ENCODE measurements at regions of chr1 and their contacts with region 1.

Region 1: DNA sequence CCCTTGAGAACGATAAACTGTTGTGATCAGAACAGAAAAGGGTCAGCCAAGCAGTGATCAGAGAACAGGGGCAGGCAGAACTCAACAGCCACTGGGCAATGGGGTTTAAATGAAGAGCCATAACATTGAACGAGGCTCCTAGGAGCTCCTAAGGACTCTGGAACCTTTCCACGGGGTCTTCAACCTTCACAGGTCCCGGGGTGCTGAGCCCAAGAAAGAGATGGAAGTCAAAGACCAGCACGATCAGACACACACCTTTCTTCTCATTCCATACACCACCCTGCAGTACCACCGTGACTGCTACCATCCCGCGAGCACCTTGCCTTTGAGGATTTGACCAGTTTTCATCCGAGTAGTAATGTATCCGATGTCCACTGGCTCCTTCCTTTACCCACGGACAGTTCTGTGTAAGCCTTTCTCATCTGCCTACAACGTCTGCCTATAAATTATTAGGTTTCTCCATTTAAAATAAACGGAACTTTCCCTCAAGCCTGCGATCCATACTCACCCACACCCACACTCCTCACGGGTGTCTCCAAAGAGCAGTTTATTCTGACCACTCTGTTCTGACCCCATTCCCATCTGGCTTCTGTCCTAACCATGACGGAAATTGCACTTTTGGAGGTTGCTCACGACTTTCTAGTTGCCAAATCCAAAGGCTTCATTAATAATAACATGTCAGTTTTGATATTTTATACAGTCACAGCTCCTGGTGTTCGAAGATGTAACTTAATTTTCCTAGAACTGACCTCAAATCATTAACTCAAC is 16.8 kb upstream of the HHAT start:
- H3K4me3 ChIP-seq: peak overlapping the region; percentile 42; the same call in 1 of the 2 replicates
- H3K27ac ChIP-seq: no peak overlapping the region; the same call in 1 of the 2 replicates
- H3K4me1 ChIP-seq: no peaks in the 10 kb centered on the region
- CTCF ChIP-seq: no peak

Region 2: DNA sequence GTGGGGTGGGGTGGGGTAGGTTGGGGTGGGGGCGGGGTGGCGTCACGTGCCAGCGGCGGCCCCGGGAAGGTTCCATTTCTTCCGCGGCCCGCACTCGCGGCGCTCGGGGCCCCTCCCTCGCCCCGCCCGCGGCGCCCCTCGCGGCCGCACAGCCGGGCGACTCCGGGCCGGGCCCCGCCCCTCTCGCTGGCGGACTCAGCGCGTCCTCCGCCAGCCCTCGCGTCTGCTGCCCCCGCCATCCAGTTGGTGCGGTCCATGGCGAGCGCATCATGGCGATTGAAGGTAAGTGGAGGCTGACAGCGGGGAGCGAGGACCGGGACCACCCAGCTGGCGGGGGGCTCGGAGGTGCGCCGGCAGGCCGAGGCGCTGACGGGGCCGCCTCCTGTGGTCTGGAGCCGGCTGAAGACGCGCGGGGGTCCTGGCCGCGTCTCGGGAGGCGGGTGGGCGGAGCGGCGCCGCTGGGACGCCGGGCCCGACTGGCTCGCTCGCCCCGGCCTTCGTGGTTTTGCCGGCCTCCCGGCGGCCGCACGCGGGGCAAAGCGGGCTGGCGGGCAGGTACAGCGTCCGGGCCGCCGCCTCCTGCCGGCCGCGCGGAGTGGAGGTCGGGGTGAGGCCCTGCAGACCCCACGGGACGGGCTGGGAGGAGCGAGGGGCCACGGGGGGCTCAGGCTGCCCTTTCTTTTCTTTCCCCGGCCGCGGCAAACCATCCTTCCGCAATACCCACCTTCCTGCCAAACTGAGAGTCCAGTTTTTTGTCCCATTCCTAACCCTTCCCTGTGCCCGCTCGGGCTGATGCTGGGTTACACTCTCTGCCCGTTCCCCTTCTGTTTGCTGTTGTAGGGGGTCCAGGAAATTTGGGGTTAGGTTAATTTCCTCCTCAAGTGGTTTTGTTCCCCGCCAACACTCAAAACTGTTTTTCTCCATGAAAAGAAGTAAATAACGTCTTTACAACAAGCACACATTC is 373.6 kb before region 1 on chr1 and contains the start of gene SYT14:
- CTCF ChIA-PET with region 1: no interaction called
- POLR2A ChIA-PET with region 1: interaction called, 16 read pairs
- H3K4me3 ChIP-seq: peak within 1 kb of the TSS; percentile 79
- H3K27ac ChIP-seq: peak within 1 kb of the TSS; percentile 75; the same call in 1 of the 2 replicates
- H3K4me1 ChIP-seq: peaks cover 7% of the 10 kb centered on the region; the same call in 1 of the 2 replicates
- CTCF ChIP-seq: no peak

Region 3: DNA sequence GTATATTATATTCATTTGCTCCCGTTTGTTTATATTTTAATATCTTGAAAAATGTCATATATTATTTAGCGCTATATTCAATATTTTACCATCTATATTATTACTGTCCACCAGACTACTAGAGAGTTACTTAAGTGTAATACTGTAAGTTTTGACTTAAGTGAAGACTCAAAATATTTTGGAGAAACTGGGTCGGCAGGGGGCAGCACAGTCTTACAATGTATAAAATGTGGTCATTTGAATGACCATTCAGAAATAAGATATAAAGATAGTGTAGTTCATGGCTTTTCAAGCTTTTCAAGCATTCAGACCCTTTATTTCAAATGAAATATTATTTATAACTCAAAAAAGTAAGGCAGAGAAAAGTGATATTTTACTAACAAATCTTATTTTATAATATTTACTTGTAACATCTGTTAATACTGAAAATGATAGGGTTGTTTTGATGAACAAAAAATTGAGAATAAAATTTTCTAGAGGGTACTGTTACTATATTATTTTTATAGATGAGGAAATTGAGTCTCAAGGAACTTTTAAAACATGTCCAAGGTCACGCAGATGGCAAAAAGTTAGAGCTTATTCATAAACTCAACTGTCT is 168.3 kb before region 1 on chr1:
- CTCF ChIA-PET with region 1: interaction called, 71 read pairs
- POLR2A ChIA-PET with region 1: interaction called, 4 read pairs
- H3K4me3 ChIP-seq: no peak overlapping the region
- H3K27ac ChIP-seq: no peak overlapping the region
- H3K4me1 ChIP-seq: no peaks in the 10 kb centered on the region
- CTCF ChIP-seq: no peak

Region 4: GRCh38 chr1:210222340-210223006 is 89.4 kb before region 1 on chr1:
- CTCF ChIA-PET with region 1: interaction called, 13 read pairs
- POLR2A ChIA-PET with region 1: no interaction called
- H3K4me3 ChIP-seq: no peak overlapping the region
- H3K27ac ChIP-seq: 0 out of 2 replicates have a peak overlapping the region, but pooled peaks have one; percentile 5
- H3K4me1 ChIP-seq: 0 out of 2 replicates have a peak, but pooled peaks cover 5% of the 10 kb centered on the region
- CTCF ChIP-seq: no peak

Region 5: GRCh38 chr1:210292231-210292871 is 19.6 kb before region 1 on chr1:
- CTCF ChIA-PET with region 1: interaction called, 11 read pairs
- POLR2A ChIA-PET with region 1: interaction called, 3 read pairs
- H3K4me3 ChIP-seq: peak overlapping the region; percentile 33
- H3K27ac ChIP-seq: peak overlapping the region; percentile 78; the same call in 1 of the 2 replicates
- H3K4me1 ChIP-seq: peaks cover 20% of the 10 kb centered on the region
- CTCF ChIP-seq: peak; percentile 83

Region 6: DNA sequence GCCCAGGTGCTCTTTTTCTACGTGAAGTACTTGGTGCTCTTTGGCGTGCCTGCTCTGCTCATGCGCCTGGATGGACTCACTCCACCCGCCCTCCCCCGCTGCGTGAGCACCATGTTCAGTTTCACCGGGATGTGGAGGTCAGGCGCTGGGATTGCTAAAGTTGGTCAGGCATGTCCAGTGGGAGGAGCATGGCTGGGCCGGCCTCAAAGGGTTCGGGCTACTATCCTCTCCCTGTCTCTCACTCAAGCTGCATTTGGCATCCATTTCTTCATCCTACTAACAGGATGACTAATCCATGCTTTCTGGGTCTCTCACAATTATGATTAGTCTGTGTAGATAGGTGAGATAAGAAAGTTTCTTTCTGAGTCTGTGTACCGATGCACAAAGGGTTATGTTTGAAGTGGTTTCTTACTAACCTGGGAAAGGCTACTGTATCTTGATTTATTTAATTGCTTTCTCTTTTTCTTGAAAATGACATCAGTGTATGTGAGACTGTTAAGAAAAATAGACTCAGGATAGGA is 152.7 kb after region 1 on chr1:
- CTCF ChIA-PET with region 1: no interaction called
- POLR2A ChIA-PET with region 1: no interaction called
- H3K4me3 ChIP-seq: no peak overlapping the region
- H3K27ac ChIP-seq: peak overlapping the region; percentile 4; the same call in 1 of the 2 replicates
- H3K4me1 ChIP-seq: no peaks in the 10 kb centered on the region; the same call in 1 of the 2 replicates
- CTCF ChIP-seq: no peak

Region 7: DNA sequence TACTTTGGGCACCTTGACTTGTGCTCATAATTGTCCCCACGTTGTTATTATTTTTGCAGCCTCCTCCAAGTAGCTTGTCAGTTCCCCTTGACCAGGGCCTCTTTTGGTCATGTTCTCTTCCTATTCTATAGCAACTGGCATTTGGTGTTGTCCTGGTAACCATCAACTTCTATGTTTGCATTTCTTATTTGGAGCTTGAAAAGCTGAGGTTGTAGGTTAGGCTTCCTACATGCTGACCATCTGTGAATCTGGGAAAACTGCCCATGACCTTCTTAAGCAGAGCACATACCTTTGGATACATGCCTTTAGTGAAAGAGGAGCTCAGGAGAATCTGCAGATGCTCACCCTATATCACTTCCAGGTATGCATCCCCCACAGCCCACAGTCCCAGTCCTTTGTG is 177.6 kb after region 1 on chr1:
- CTCF ChIA-PET with region 1: no interaction called
- POLR2A ChIA-PET with region 1: no interaction called
- H3K4me3 ChIP-seq: no peak overlapping the region
- H3K27ac ChIP-seq: no peak overlapping the region
- H3K4me1 ChIP-seq: no peaks in the 10 kb centered on the region
- CTCF ChIP-seq: no peak